Transverse colon (tissue), 4 donors: ENCODE measurements at regions of chr19 and their contacts with region 1.

Region 1: GRCh38 chr19:36986601-36987000 is 70.5 kb downstream of the ZNF568 start:
- DNase-seq: no peak
- H3K4me3 ChIP-seq: no peak overlapping the region
- H3K27ac ChIP-seq: no peak overlapping the region
- H3K4me1 ChIP-seq: no peaks in the 10 kb centered on the region
- H3K27me3 ChIP-seq: no peaks in the 10 kb centered on the region
- CTCF ChIP-seq: no peak
- EP300 ChIP-seq: no peak
- POLR2A ChIP-seq: no peak

Region 2: DNA sequence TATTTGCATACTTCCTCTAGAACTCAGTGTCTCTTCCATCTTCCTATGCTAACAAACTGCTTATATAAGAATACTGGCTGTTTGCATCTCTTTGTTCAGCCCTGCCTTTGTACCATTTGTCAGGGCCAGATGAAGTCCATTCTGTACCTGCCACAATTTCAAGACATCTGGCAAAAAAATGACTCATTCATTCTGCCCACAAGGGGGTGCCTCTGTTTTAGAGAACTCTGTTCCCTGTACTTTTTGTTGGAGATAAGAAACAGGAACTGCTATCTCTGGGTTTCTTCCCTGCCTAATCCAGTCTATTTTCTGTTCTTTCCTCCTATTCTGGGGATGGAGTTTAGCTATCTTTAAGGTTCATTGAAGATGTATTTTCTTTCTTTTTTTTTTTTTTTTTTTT is 47.4 kb before region 1 on chr19:
- in situ Hi-C with region 1: no loop called
- intact Hi-C with region 1: no loop called
- DNase-seq: no peak
- H3K4me3 ChIP-seq: no peak overlapping the region
- H3K27ac ChIP-seq: no peak overlapping the region
- H3K4me1 ChIP-seq: no peaks in the 10 kb centered on the region
- H3K27me3 ChIP-seq: no peaks in the 10 kb centered on the region
- CTCF ChIP-seq: no peak
- EP300 ChIP-seq: no peak
- POLR2A ChIP-seq: no peak

Region 3: DNA sequence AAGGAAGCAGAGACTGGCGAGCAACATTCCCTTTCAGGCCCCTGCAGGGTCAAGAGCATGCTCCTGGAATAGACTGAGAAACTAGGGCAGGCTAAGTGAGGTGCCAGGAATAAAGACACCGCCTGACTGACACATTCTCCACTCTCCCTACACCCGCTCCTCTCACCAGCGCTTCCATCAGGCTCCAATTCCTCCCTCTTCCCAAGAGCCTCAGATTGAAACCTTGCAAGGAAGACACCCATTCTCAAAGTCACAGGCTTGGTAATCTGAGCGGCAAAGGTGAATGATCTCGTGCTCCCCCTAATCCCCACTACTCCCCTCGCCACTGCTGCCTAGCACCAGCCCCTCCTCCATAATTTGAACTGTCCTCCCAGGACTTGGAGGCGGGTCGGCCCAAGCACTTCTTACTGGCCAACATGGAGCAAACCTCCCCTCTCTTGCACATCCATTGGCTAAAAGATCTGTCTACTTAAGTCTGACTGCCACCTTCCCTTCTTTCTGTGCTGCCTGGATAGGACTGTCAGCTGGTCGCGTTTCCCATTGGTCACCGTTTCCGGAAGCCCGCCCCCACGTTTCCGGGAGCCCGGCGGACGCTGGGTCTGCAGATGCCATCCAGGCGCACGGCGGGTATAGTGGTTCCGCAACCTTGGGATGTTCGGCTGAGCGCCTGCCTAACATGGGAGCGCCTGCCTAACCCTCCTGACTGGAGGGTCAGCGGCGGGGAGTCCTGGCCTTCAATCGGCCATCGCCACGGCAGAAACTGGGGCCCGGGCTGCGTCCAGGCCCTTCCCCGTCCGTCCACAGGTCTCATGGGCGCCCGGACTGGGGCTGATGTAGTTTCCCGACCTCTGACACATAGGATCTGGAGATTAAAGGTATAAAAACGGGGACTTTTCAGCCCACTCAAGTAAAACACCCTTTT is 265.0 kb after region 1 on chr19:
- in situ Hi-C with region 1: loop called in 1 of 4 experiments (anchors 25 kb)
- intact Hi-C with region 1: no loop called
- DNase-seq: peak; percentile 48
- H3K4me3 ChIP-seq: peak overlapping the region; percentile 28 to 58 (median 34)
- H3K27ac ChIP-seq: peak overlapping the region in 3 of 4 donors; percentile 30 to 55 (median 47)
- H3K4me1 ChIP-seq: no peaks in the 10 kb centered on the region
- H3K27me3 ChIP-seq: no peaks in the 10 kb centered on the region
- CTCF ChIP-seq: no peak
- EP300 ChIP-seq: no peak
- POLR2A ChIP-seq: peak; percentile 29